ENCODE measurements at regions of chr3 and their contacts with region 1.

Region 1: GRCh38 chr3:104018541-104018940 is 1348.2 kb upstream of the ALCAM start:
- DNase-seq: no peak
- ATAC-seq: no peak
- H3K4me3 ChIP-seq: no peak overlapping the region
- H3K27ac ChIP-seq: no peak overlapping the region
- H3K4me1 ChIP-seq: no peaks in the 10 kb centered on the region
- H3K27me3 ChIP-seq: no peaks in the 10 kb centered on the region
- CTCF ChIP-seq: no peak

Region 2: GRCh38 chr3:104005816-104006215 is 12.7 kb before region 1 on chr3:
- intact Hi-C with region 1: loop called in 1 of 10 experiments (anchors 1 kb)
- DNase-seq: no peak
- ATAC-seq: no peak
- H3K4me3 ChIP-seq: no peak overlapping the region
- H3K27ac ChIP-seq: no peak overlapping the region
- H3K4me1 ChIP-seq: no peaks in the 10 kb centered on the region
- H3K27me3 ChIP-seq: no peaks in the 10 kb centered on the region
- CTCF ChIP-seq: no peak